ENCODE measurements at regions of chr3 and their contacts with region 1.

Region 1: GRCh38 chr3:177554895-177555759 is 357.8 kb upstream of the TBL1XR1 start:
- DNase-seq: no peak
- H3K4me3 Mint-ChIP-seq: no peak overlapping the region
- H3K27ac Mint-ChIP-seq: no peak overlapping the region
- H3K4me1 Mint-ChIP-seq: peaks cover 48% of the 10 kb centered on the region
- H3K27me3 Mint-ChIP-seq: no peaks in the 10 kb centered on the region

Region 2: GRCh38 chr3:177646749-177647148 is 91.6 kb after region 1 on chr3:
- CTCF ChIA-PET with region 1: no interaction called
- POLR2A ChIA-PET with region 1: no interaction called
- intact Hi-C with region 1: loop called (anchors 5 kb)
- DNase-seq: peak; percentile 45
- H3K4me3 Mint-ChIP-seq: no peak overlapping the region
- H3K27ac Mint-ChIP-seq: no peak overlapping the region
- H3K4me1 Mint-ChIP-seq: peaks cover 55% of the 10 kb centered on the region
- H3K27me3 Mint-ChIP-seq: no peaks in the 10 kb centered on the region

Measured in activated CD4-positive, alpha-beta memory T cell treated with anti-CD3 and anti-CD28 coated beads for 36 hours (primary cell).